ENCODE measurements at regions of chr5 and their contacts with region 1.

Region 1: GRCh38 chr5:96070625-96071246 is 109.1 kb upstream of the ELL2 start:
- DNase-seq: no peak
- ATAC-seq: no peak
- H3K4me3 ChIP-seq: no peak overlapping the region
- H3K27ac ChIP-seq: no peak overlapping the region
- H3K4me1 ChIP-seq: no peaks in the 10 kb centered on the region
- H3K27me3 ChIP-seq: no peaks in the 10 kb centered on the region
- CTCF ChIP-seq: no peak

Region 2: DNA sequence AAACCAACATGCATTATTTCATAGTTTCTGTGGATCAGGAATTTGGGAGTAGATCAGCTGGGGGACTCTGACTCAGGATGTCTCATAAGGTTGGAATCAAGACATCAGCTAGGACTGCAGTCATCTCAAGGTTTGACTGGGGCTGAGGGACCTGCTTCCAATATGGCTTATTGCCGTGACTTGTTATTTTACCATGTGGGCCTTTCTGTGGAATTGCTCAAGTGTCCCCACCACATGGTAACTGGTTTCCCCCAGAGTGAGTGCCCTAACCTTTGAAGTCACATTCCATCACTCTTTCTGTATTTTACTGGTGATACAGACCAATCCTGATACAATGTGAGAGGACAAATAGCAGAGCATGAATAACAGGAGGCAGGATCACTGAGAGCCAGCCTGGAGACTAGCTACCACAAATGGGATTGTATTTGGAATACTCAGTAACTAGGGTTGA is 38.9 kb before region 1 on chr5:
- intact Hi-C with region 1: loop called in 1 of 2 experiments (anchors 5 kb)
- DNase-seq: no peak
- ATAC-seq: no peak
- H3K4me3 ChIP-seq: no peak overlapping the region
- H3K27ac ChIP-seq: no peak overlapping the region
- H3K4me1 ChIP-seq: no peaks in the 10 kb centered on the region
- H3K27me3 ChIP-seq: no peaks in the 10 kb centered on the region
- CTCF ChIP-seq: no peak